Adrenal gland (tissue), 19 donors: ENCODE measurements at regions of chr6 and their contacts with region 1.

Region 1: DNA sequence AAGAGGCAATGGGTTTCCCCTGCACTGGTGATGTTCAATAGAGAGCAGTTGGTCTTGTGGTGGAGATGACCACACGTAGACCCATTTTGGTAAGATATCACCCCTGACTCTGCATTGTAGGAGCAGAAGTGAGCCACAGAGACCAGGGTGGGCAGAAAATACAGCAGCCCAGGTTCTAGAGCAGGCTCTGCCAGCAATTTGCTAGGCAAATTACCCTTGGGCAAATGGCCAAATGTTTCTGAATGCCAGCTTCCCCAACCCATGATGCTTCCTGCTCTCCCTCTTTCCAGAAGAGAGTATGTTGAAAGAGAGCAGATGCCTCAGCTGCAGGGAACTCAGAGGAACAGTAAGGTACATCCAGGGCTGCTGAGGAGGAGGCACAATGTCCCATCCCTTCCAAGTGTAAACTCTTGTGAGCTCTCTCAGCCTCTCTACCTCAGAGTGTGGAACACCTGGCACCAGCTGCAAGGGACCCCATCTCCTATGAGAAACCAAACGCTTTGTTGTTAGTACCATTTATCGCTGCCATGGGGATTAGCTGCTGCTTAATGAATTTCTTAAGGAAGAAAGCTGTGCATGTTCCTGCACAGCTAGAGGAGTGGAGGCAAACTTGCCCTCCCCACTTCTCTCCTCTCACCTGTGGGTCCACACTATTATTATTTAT is 317.5 kb upstream of the MOCS1 start:
- DNase-seq: no peak
- H3K4me3 ChIP-seq: no peak overlapping the region
- H3K27ac ChIP-seq: no peak overlapping the region
- H3K4me1 ChIP-seq: no peaks in the 10 kb centered on the region
- H3K27me3 ChIP-seq: no peaks in the 10 kb centered on the region
- CTCF ChIP-seq: no peak
- POLR2A ChIP-seq: no peak

Region 2: DNA sequence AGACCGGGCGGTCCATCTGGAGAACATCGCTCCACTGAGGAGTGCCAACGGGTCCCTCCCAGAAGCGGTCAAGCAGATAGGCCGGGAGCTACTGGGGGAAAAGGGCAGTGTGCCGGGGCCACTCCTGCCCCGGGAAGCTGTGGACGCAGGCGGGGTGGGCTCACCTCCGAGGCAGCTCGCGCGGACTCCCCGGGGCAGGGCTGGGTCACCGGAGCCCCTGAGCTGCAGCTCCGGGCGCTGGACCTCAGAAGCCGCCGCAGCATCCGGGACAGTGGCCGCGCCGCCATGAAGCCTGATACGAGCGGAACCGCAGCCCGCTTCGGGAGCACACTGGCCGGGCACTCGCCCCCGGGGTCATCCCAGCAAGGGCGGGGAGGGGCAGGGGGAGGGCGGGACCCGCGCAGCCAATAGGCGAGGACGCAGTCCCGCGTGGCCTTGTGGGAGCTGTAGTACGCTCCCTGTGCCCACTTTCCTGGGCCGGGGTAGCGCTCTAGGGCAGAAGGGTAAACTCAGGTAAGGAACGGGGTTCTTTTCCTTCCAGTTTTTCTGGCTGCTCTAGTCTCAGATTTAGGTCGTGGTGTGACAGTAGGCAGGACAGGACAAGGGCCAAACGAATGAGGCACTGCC is 317.5 kb before region 1 on chr6 and contains the start of gene MOCS1:
- intact Hi-C with region 1: loop called in 1 of 2 experiments (anchors 5 kb)
- DNase-seq: peak; percentile 86 to 92 (median 90)
- H3K4me3 ChIP-seq: peak within 1 kb of the TSS in 2 of 4 donors; percentile 74 to 78
- H3K27ac ChIP-seq: peak within 1 kb of the TSS in 4 of 5 donors; percentile 11 to 89 (median 72)
- H3K4me1 ChIP-seq: peaks cover 7 to 33% of the 10 kb centered on the region in 2 donors
- H3K27me3 ChIP-seq: no peaks in the 10 kb centered on the region
- CTCF ChIP-seq: no peak
- POLR2A ChIP-seq: peak; percentile 37 to 83
- total RNA-seq, gene MOCS1: 10.2 to 41.4 (median 27.6) TPM

Region 3: GRCh38 chr6:41367700-41368099 is 1115.9 kb after region 1 on chr6:
- intact Hi-C with region 1: no loop called
- DNase-seq: peak in 5 of 7 donors; percentile 24 to 57 (median 35)
- H3K4me3 ChIP-seq: no peak overlapping the region
- H3K27ac ChIP-seq: no peak overlapping the region
- H3K4me1 ChIP-seq: peaks cover 4 to 13% of the 10 kb centered on the region in 2 donors
- H3K27me3 ChIP-seq: peaks cover 56% of the 10 kb centered on the region
- CTCF ChIP-seq: peak in 5 of 6 experiments; percentile 17 to 50 (median 47)
- POLR2A ChIP-seq: no peak